Gastrocnemius medialis (tissue), 4 donors: ENCODE measurements at regions of chr3 and their contacts with region 1.

Region 1: DNA sequence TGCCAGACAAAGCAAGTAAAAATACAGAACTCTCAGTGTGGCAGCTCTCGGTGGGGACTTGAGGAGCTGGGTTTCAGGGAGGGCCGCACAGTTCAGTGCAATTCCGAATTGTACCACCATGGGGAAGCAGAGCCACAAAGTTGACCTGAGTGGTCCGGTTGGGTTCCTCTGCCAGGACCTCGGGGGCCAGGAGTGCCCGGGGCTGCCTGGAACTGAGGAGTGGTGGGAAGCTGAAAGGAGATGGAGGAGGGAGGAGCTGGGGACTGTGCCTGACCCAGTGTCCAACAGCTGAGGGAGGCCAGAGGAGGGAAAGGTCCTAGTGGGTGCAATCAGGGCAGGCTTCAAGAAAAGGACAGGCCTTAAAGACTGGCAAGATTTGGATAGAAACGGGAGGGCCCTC is 32.2 kb upstream of the TRH start:
- DNase-seq: peak; percentile 18
- ATAC-seq: no peak
- H3K4me3 ChIP-seq: no peak overlapping the region
- H3K27ac ChIP-seq: no peak overlapping the region
- H3K4me1 ChIP-seq: no peaks in the 10 kb centered on the region
- H3K27me3 ChIP-seq: peaks cover 0 to 4% (median 0%) of the 10 kb centered on the region in 3 donors
- CTCF ChIP-seq: peak; percentile 32 to 60 (median 50)
- POLR2A ChIP-seq: no peak

Region 2: GRCh38 chr3:129560901-129561594 is 381.2 kb before region 1 on chr3:
- in situ Hi-C with region 1: no loop called
- intact Hi-C with region 1: no loop called
- DNase-seq: peak in 1 of 2 donors; percentile 64
- ATAC-seq: peak; percentile 55 to 57
- H3K4me3 ChIP-seq: no peak overlapping the region
- H3K27ac ChIP-seq: peak overlapping the region; percentile 66 to 76 (median 72)
- H3K4me1 ChIP-seq: peaks cover 32 to 38% of the 10 kb centered on the region in 2 donors
- H3K27me3 ChIP-seq: no peaks in the 10 kb centered on the region
- CTCF ChIP-seq: no peak
- POLR2A ChIP-seq: no peak

Region 3: DNA sequence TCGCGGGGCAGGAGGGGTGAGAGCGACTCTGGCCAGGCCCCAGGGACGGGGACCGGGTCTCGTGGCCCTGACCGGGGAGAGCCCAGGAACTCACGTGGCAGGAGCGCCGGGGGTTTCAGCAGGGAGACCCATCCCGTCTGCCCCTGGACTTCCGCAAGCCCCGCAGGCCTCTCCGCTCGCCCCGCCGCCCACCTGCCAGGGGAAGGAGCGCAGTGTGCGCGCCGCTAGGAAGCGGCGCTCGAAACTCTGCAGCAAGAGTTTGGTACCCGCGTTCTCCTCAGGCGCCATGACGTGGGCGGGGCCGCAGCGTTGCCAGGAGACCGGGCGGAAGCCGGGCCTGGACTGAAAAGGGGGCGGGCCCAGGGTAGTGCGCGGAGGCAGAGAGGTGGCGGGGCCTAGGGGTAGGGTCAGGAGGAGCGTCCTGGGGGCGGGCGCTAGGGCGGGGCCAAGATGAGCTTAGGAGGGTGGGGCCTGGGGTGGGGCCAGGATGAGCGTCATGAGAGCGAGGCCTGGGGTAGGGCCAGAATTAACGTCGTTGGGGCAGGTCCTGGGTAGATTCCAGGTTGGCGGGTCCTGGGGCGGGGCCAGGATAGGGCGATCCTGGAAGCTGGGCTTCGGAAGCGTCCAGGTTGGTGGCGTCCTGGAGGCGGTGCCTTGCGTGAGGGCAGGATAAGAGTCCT is 169.0 kb after region 1 on chr3:
- in situ Hi-C with region 1: no loop called
- intact Hi-C with region 1: loop called (anchors 10 kb)
- DNase-seq: peak; percentile 98
- ATAC-seq: peak; percentile 100
- H3K4me3 ChIP-seq: peak overlapping the region; percentile 59 to 99 (median 78)
- H3K27ac ChIP-seq: peak overlapping the region; percentile 80 to 93 (median 87)
- H3K4me1 ChIP-seq: peaks cover 4 to 11% of the 10 kb centered on the region in 2 donors
- H3K27me3 ChIP-seq: no peaks in the 10 kb centered on the region
- CTCF ChIP-seq: no peak
- POLR2A ChIP-seq: no peak